CD4-positive, alpha-beta T cell (primary cell): ENCODE measurements at regions of chr19 and their contacts with region 1.

Region 1: GRCh38 chr19:17226002-17226933 is at the start of gene OCEL1:
- DNase-seq: peak; percentile 90 to 99 (median 96)
- ATAC-seq: peak; percentile 88
- H3K4me3 ChIP-seq: peak within 1 kb of the TSS; percentile 61
- H3K4me3 Mint-ChIP-seq: peak within 1 kb of the TSS; percentile 95
- H3K27ac ChIP-seq: peak within 1 kb of the TSS; percentile 70 to 84
- H3K27ac Mint-ChIP-seq: peak within 1 kb of the TSS; percentile 90
- H3K4me1 ChIP-seq: peaks cover 24% of the 10 kb centered on the region
- H3K4me1 Mint-ChIP-seq: peaks cover 4% of the 10 kb centered on the region
- H3K27me3 ChIP-seq: no peaks in the 10 kb centered on the region
- H3K27me3 Mint-ChIP-seq: no peaks in the 10 kb centered on the region
- CTCF ChIP-seq: no peak
- total RNA-seq, gene OCEL1: 20.5 to 22.2 TPM

Region 2: DNA sequence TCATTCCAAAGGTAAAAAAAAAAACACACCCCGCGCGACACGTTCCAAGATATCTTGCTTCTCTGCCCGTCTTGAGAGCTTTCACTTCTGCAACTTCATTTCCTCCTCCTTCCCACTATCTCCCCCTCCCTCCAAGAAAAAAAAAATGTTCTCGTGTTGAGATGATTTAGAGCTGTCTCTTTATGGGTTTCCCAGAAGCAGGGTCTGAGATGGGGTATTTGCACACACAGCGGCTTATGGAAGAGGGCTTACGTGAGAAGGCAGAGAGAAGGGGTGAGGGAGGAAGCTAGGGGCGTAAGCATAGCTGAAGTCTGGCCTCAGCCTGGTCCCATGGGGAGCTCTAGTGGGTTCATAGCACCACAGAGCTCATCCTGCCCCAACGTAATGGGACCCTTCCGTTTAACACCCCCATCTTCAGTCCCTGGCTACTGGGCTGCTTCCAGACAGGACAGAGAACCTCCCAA is 42.4 kb before region 1 on chr19:
- CTCF ChIA-PET with region 1: interaction called, 4 read pairs
- POLR2A ChIA-PET with region 1: interaction called, 16 read pairs
- intact Hi-C with region 1: no loop called
- DNase-seq: peak in 6 of 14 experiments; percentile 7 to 63 (median 46)
- ATAC-seq: peak; percentile 57
- H3K4me3 ChIP-seq: peak overlapping the region; percentile 41
- H3K4me3 Mint-ChIP-seq: peak overlapping the region; percentile 83
- H3K27ac ChIP-seq: peak overlapping the region; percentile 46 to 82
- H3K27ac Mint-ChIP-seq: peak overlapping the region; percentile 89
- H3K4me1 ChIP-seq: peaks cover 35% of the 10 kb centered on the region
- H3K4me1 Mint-ChIP-seq: peaks cover 19% of the 10 kb centered on the region
- H3K27me3 ChIP-seq: no peaks in the 10 kb centered on the region
- H3K27me3 Mint-ChIP-seq: no peaks in the 10 kb centered on the region
- CTCF ChIP-seq: no peak

Region 3: DNA sequence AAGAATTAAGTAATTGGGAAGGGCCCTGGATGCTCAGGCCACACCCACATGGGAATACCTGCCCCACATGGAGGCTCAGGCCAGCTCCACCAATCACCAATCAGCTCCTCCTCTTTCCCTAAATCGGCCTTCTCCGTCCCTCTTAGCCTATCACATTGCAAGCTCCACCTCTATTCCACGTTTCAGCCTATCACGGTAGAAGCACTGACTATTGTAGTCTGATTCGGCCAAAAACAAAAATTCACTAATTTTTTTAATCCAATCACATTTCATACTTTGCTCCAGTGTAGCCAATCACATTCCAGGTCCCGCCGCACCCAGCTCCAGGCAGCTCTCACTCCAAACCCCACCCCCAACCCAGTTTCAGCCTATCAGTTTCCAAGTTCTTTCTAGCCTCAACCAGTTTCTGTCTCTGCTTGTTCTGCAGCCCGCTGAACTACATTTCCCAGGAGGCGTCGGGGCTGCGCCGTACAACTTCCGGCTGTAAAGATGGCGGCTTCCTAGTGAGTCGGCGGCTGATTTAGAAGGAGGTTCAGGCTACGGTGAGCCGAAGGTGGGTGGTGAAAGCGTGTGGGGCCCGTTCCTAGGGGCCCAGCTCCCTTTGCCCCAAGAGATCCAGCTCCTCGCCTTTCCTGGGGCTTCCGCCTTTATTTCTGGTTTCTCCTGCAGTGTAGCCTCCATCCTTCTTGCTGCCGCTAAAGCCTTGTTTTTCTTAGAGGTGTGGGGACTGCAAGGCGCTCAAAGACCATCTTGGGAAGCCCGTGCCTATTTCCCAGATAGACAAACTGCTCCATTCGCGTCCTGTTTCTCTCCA is 40.9 kb after region 1 on chr19 and contains the start of gene BABAM1:
- CTCF ChIA-PET with region 1: no interaction called
- POLR2A ChIA-PET with region 1: interaction called, 12 read pairs
- intact Hi-C with region 1: loop called in 1 of 2 experiments (anchors 5 kb)
- DNase-seq: peak; percentile 85 to 99 (median 92)
- ATAC-seq: peak; percentile 94
- H3K4me3 ChIP-seq: peak within 1 kb of the TSS; percentile 84
- H3K4me3 Mint-ChIP-seq: peak within 1 kb of the TSS; percentile 83
- H3K27ac ChIP-seq: peak within 1 kb of the TSS; percentile 47 to 63
- H3K27ac Mint-ChIP-seq: peak within 1 kb of the TSS; percentile 69
- H3K4me1 ChIP-seq: peaks cover 39% of the 10 kb centered on the region
- H3K4me1 Mint-ChIP-seq: peaks cover 15% of the 10 kb centered on the region
- H3K27me3 ChIP-seq: no peaks in the 10 kb centered on the region
- H3K27me3 Mint-ChIP-seq: no peaks in the 10 kb centered on the region
- CTCF ChIP-seq: no peak
- total RNA-seq, gene BABAM1: 56.2 to 63.5 TPM